Spleen (tissue), 13 donors: ENCODE measurements at regions of chr2 and their contacts with region 1.

Region 1: GRCh38 chr2:84925724-84926376 is 20.4 kb downstream of the TMSB10 start:
- DNase-seq: peak; percentile 99
- H3K4me3 ChIP-seq: peak overlapping the region; percentile 29 to 79 (median 52)
- H3K27ac ChIP-seq: peak overlapping the region in 6 of 8 donors; percentile 27 to 81 (median 75)
- H3K4me1 ChIP-seq: peaks cover 16 to 48% (median 39%) of the 10 kb centered on the region in 6 donors
- H3K27me3 ChIP-seq: no peaks in the 10 kb centered on the region
- CTCF ChIP-seq: peak; percentile 98 to 100 (median 99)
- POLR2A ChIP-seq: no peak

Region 2: DNA sequence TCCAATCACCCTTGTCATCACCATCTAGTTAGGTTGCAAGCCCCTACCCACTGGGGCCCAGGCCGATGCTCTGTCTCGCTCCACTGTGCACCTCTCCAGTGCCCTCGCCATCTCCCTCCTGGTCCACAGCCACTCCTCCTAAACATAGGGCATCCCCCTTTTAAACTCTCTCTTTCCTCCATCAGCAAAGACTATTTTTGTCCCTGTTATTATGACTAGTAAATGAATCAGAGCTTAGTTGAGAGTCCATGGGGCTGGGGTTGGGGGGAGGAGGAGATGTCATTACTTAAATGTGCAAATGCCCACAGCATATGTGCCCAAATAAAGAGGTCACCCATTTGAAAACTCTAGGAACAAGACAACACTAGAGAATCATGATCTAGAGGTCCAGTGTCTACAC is 212.4 kb before region 1 on chr2:
- intact Hi-C with region 1: no loop called
- DNase-seq: no peak
- H3K4me3 ChIP-seq: no peak overlapping the region
- H3K27ac ChIP-seq: no peak overlapping the region
- H3K4me1 ChIP-seq: no peaks in the 10 kb centered on the region
- H3K27me3 ChIP-seq: no peaks in the 10 kb centered on the region
- CTCF ChIP-seq: no peak
- POLR2A ChIP-seq: no peak

Region 3: DNA sequence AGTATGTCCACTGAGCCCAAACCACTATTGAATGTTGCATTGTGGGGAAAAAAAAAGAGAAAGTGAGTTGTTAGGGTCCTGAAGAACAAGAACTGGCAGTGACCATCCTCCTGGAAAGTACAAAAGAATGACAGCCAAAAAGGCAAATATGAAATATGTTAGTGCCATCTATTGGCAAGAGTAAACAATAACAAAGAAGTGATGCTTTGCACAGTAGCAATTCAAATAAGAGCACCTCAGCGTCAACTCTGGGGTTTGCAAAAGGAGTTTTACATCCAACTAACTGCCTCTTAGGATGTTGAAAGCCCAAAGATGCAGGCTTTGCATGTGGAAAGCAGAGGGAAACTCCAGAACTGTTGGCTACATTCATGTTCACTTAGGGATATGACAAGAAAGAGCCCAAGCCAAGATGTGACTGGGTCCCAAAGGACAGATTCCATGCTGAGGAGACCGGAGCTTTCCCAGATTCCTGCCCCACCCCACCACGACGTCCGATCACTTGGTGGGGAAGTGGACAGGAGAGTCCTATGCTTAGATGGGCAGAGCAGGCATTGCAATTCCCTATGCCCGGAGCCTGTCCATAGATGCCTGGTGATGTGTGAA is 60.6 kb before region 1 on chr2:
- intact Hi-C with region 1: loop called (anchors 5 kb)
- DNase-seq: no peak
- H3K4me3 ChIP-seq: no peak overlapping the region
- H3K27ac ChIP-seq: peak overlapping the region in 1 of 8 donors; percentile 16
- H3K4me1 ChIP-seq: peaks cover 0 to 15% (median 1%) of the 10 kb centered on the region in 6 donors
- H3K27me3 ChIP-seq: no peaks in the 10 kb centered on the region
- CTCF ChIP-seq: peak in 8 of 11 experiments; percentile 23 to 66 (median 54)
- POLR2A ChIP-seq: no peak

Region 4: DNA sequence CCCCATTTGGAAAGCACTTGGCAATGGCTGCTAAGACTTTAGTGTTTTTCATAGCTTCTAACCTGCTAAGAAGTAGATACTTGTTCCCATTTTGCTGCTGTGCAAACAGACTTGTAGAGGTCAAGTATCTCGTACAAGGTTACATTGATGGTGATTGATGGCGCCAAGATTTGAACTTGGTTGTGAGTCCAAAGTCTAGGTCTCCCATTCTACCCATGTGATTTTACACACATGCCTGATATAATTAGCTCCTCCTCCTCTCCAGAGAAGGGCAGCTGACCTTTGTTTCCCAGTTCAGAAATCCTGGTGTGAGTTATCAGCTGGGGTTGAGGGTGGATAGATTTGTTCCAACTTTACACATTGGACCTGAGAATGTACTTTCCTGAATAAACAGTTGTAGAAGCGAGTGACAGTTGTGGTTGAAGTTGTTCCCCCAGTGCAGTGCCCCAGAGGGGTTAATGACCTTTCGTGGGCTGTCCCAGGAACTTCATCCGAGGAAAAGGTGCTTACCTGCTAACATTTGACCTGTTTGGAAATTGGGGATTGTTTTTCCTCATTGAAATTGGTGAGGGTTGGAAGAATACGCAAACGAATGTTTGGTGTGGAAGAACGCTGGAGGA is 217.7 kb after region 1 on chr2:
- intact Hi-C with region 1: no loop called
- DNase-seq: no peak
- H3K4me3 ChIP-seq: no peak overlapping the region
- H3K27ac ChIP-seq: no peak overlapping the region
- H3K4me1 ChIP-seq: no peaks in the 10 kb centered on the region
- H3K27me3 ChIP-seq: peaks cover 0 to 32% (median 0%) of the 10 kb centered on the region in 7 donors
- CTCF ChIP-seq: no peak
- POLR2A ChIP-seq: no peak